HCT116 (cell line): ENCODE measurements at regions of chr15 and their contacts with region 1.

Region 1: DNA sequence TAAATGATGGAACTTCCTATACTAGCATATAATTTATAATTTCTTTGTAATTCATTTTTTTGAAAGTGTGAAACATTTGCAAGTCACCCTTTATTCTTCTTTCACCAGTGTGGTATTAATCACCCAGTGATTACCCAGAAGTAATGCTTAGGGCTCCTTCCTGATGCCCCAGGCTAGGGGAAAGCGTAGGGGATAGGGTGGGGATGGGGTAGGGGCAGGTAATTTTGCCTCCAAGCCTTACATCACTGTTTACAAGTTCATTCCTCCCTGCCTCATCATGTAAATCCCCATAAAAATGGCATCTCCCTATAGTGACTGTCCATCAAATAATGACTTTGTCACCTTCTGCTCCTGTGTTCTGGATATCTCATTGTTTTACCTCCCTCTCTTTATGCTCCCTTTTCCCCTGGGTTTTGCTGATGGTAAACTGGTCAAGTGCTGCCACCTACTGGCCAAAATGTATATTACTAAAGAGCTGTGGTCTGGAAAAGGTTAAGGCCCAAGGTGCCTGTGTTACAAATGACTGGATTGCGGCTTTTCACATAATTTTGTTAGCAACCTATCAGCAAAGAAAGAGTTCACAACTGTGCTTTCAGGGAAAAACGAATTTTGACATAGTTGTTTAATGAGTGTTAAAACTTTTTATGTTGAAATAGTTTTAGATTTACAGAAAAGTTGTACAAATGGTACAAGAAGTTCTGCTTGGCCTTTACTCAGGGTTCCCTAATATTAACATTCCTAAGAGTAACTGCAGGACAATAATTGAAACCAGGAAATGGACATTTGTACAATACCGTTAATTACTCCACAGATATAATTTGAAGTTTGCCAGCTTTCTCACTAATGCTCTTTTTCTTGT is 54.7 kb downstream of the ONECUT1 start:
- DNase-seq: peak; percentile 78
- ATAC-seq: peak; percentile 98
- H3K4me3 ChIP-seq: no peak overlapping the region
- H3K27ac ChIP-seq: no peak overlapping the region
- H3K4me1 ChIP-seq: no peaks in the 10 kb centered on the region
- H3K27me3 ChIP-seq: no peaks in the 10 kb centered on the region
- CTCF ChIP-seq: peak; percentile 58 to 89 (median 79); a peak in 5 of 6 replicates
- POLR2A ChIP-seq: no peak
- RAD21 ChIP-seq: peak; percentile 93

Region 2: GRCh38 chr15:52217186-52217585 is 518.3 kb before region 1 on chr15:
- CTCF ChIA-PET with region 1: interaction called, 7 read pairs
- POLR2A ChIA-PET with region 1: no interaction called
- RAD21 ChIA-PET with region 1: interaction called in 1 of 2 experiments, 4 read pairs
- intact Hi-C with region 1: loop called (anchors 1 kb)
- DNase-seq: no peak
- ATAC-seq: peak; percentile 93
- H3K4me3 ChIP-seq: no peak overlapping the region
- H3K27ac ChIP-seq: no peak overlapping the region
- H3K4me1 ChIP-seq: no peaks in the 10 kb centered on the region
- H3K27me3 ChIP-seq: no peaks in the 10 kb centered on the region
- CTCF ChIP-seq: peak; percentile 12 to 52 (median 50); a peak in 4 of 6 replicates
- POLR2A ChIP-seq: no peak
- RAD21 ChIP-seq: peak; percentile 38

Region 3: GRCh38 chr15:52256366-52256765 is 479.1 kb before region 1 on chr15:
- CTCF ChIA-PET with region 1: interaction called, 72 read pairs
- POLR2A ChIA-PET with region 1: no interaction called
- RAD21 ChIA-PET with region 1: interaction called in 1 of 2 experiments, 5 read pairs
- intact Hi-C with region 1: loop called (anchors 1 kb)
- DNase-seq: peak; percentile 62
- ATAC-seq: peak; percentile 63
- H3K4me3 ChIP-seq: no peak overlapping the region
- H3K27ac ChIP-seq: no peak overlapping the region
- H3K4me1 ChIP-seq: peaks cover 13 to 42% of the 10 kb centered on the region in 2 experiments
- H3K27me3 ChIP-seq: no peaks in the 10 kb centered on the region
- CTCF ChIP-seq: peak; percentile 59 to 74 (median 66); a peak in 5 of 6 replicates
- POLR2A ChIP-seq: no peak
- RAD21 ChIP-seq: peak; percentile 85

Region 4: GRCh38 chr15:52331490-52332240 is 403.8 kb before region 1 on chr15:
- CTCF ChIA-PET with region 1: interaction called, 7 read pairs
- POLR2A ChIA-PET with region 1: no interaction called
- RAD21 ChIA-PET with region 1: interaction called, 3 to 5 read pairs
- intact Hi-C with region 1: loop called (anchors 1 kb)
- DNase-seq: peak; percentile 10
- ATAC-seq: peak; percentile 69
- H3K4me3 ChIP-seq: no peak overlapping the region
- H3K27ac ChIP-seq: no peak overlapping the region
- H3K4me1 ChIP-seq: peaks cover 0 to 4% of the 10 kb centered on the region in 2 experiments; a peak in 1 of 4 replicates
- H3K27me3 ChIP-seq: no peaks in the 10 kb centered on the region
- CTCF ChIP-seq: peak; percentile 6 to 32 (median 32); a peak in 4 of 6 replicates
- POLR2A ChIP-seq: no peak
- RAD21 ChIP-seq: peak; percentile 64

Region 5: GRCh38 chr15:52568601-52569256 is 166.7 kb before region 1 on chr15 and contains the start of gene ARPP19:
- CTCF ChIA-PET with region 1: no interaction called
- POLR2A ChIA-PET with region 1: no interaction called
- RAD21 ChIA-PET with region 1: no interaction called
- intact Hi-C with region 1: loop called (anchors 10 kb)
- DNase-seq: peak; percentile 95
- ATAC-seq: peak; percentile 93
- H3K4me3 ChIP-seq: peak within 1 kb of the TSS; percentile 91 to 98
- H3K27ac ChIP-seq: peak within 1 kb of the TSS; percentile 91
- H3K4me1 ChIP-seq: peaks cover 8 to 16% of the 10 kb centered on the region in 2 experiments
- H3K27me3 ChIP-seq: no peaks in the 10 kb centered on the region
- CTCF ChIP-seq: no peak
- POLR2A ChIP-seq: peak; percentile 40
- RAD21 ChIP-seq: no peak
- total RNA-seq, gene ARPP19: 163 TPM

Region 6: GRCh38 chr15:52695183-52695582 is 40.3 kb before region 1 on chr15:
- CTCF ChIA-PET with region 1: no interaction called
- POLR2A ChIA-PET with region 1: no interaction called
- RAD21 ChIA-PET with region 1: no interaction called
- intact Hi-C with region 1: no loop called
- DNase-seq: no peak
- ATAC-seq: no peak
- H3K4me3 ChIP-seq: no peak overlapping the region
- H3K27ac ChIP-seq: no peak overlapping the region
- H3K4me1 ChIP-seq: no peaks in the 10 kb centered on the region
- H3K27me3 ChIP-seq: no peaks in the 10 kb centered on the region
- CTCF ChIP-seq: no peak
- POLR2A ChIP-seq: no peak
- RAD21 ChIP-seq: no peak

Region 7: GRCh38 chr15:52709190-52709981 is 26.1 kb before region 1 on chr15:
- CTCF ChIA-PET with region 1: no interaction called
- POLR2A ChIA-PET with region 1: no interaction called
- RAD21 ChIA-PET with region 1: no interaction called
- intact Hi-C with region 1: no loop called
- DNase-seq: no peak
- ATAC-seq: peak; percentile 80
- H3K4me3 ChIP-seq: no peak overlapping the region
- H3K27ac ChIP-seq: no peak overlapping the region
- H3K4me1 ChIP-seq: 0 out of 4 replicates have a peak, but pooled peaks cover 0 to 3% of the 10 kb centered on the region in 2 experiments
- H3K27me3 ChIP-seq: 0 out of 2 replicates have a peak, but pooled peaks cover 5% of the 10 kb centered on the region
- CTCF ChIP-seq: no peak
- POLR2A ChIP-seq: no peak
- RAD21 ChIP-seq: no peak

Region 8: GRCh38 chr15:53962332-53963241 is 1227.1 kb after region 1 on chr15:
- CTCF ChIA-PET with region 1: no interaction called
- POLR2A ChIA-PET with region 1: no interaction called
- RAD21 ChIA-PET with region 1: no interaction called
- intact Hi-C with region 1: no loop called
- DNase-seq: no peak
- ATAC-seq: no peak
- H3K4me3 ChIP-seq: no peak overlapping the region
- H3K27ac ChIP-seq: no peak overlapping the region
- H3K4me1 ChIP-seq: no peaks in the 10 kb centered on the region
- H3K27me3 ChIP-seq: no peaks in the 10 kb centered on the region
- CTCF ChIP-seq: peak in 2 of 3 experiments; percentile 18 to 42; a peak in 3 of 6 replicates
- POLR2A ChIP-seq: no peak
- RAD21 ChIP-seq: peak; percentile 19; the same call in 1 of the 2 replicates